RWPE1 (cell line): ENCODE measurements at regions of chr4 and their contacts with region 1.

Region 1: DNA sequence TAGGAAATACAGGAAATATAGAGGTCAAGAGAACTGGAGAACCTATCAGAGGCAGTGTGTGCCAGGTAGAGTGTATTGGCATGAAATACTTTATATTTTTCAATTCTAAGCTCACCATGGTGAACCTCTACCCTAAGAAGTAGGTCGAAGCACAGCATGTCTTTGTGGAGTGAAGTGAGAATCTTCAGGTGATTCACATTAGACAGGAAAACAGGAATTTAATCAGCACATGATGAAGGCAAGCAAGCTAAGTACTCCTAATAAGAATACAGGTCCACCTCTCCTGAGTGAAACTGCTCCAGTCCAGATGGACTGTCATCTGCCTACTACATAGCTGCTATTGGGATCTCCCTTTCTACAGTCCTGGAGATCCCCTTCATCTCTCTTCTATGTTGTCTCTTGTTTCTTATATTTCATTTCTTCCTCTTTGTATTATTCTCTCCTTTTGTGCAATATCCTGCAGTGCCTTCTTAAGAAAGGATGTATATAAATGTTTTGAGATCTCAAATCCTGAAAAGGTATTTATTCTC is 159.0 kb downstream of the LRBA start:
- DNase-seq: no peak
- H3K27ac ChIP-seq: no peak overlapping the region
- CTCF ChIP-seq: no peak

Region 2: GRCh38 chr4:151015459-151016347 is 159.7 kb after region 1 on chr4:
- CTCF ChIA-PET with region 1: no interaction called
- POLR2A ChIA-PET with region 1: interaction called, 12 read pairs
- DNase-seq: peak; percentile 71
- H3K27ac ChIP-seq: peak overlapping the region; percentile 95
- CTCF ChIP-seq: no peak